Mammary epithelial cell (primary cell): ENCODE measurements at regions of chr7 and their contacts with region 1.

Region 1: DNA sequence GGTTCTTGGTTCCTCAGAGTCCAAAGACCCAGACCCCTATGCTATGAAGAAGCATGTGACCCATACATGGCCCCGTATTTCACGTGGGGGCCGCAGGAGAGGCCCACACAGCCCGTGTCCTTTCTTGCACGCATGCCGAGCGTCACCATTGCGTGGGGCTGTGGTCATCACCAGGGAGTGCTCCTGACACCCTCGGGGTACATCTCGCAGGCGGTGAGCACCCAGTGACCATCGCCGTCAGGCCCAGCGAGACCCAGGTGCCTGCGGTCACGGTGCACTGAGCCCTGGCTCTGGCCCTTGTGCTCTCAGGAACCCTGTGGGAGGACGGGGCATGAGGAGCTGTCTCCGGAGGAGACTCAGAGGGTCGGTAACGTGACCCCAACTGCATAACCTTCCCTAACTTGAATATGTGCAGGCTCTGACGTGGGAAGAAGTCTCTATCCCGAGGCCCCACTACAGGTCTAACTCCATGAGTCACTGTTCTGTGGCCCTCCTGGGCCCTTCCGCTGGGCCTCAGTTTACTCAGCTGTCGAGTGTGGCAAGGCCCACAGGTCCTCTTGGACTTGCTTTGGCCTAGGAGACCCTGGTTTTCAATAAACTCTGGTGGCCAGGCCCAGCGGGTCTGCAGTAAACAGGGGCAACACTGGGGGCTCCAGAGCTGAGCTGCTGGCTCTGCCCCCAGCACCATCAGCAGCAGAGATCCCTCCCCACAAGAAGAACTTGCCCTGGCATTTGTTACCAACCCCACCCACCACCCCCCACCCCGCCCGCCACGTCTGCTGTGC is 503.9 kb downstream of the PTPRN2 start:
- DNase-seq: no peak
- H3K4me3 ChIP-seq: no peak overlapping the region
- H3K27ac ChIP-seq: no peak overlapping the region
- H3K4me1 ChIP-seq: no peaks in the 10 kb centered on the region
- H3K27me3 ChIP-seq: no peaks in the 10 kb centered on the region
- CTCF ChIP-seq: no peak

Region 2: DNA sequence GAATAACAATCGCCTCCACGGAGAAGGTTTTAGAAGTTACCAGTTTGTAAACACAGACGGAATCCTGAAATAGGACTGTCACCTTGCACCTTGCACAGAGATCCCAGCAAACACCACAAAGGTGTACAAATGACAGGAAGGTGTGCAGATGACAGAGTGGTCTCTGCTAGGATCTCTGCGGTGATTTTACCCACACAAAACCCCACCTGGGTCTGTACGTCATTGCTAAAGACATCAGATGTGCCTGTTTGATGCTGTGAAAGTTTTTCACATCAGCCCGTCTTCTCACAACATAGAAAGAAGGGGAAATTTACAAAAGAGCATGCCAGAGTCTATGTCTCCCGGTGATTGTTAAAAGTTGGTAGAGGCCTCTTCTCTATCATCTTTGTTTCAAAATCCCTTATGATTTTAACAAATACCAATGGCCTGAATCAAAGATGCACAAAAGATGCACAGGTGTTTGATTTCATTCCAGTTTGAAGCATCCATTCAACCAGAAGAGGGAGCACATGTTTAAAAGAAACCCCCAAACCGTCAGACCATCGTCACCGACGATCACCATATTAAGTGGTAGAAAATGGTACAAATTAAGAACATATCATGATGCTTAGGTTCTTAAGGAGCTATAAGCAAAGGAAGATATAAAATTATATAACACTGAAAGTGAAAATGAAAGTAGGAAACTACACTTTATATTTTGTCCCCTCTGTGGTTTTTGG is 72.6 kb before region 1 on chr7:
- CTCF ChIA-PET with region 1: no interaction called
- dilution Hi-C with region 1: loop called (anchors 5 kb)
- in situ Hi-C with region 1: no loop called
- intact Hi-C with region 1: no loop called
- DNase-seq: no peak
- H3K4me3 ChIP-seq: no peak overlapping the region
- H3K27ac ChIP-seq: no peak overlapping the region
- H3K4me1 ChIP-seq: no peaks in the 10 kb centered on the region
- H3K27me3 ChIP-seq: no peaks in the 10 kb centered on the region
- CTCF ChIP-seq: no peak

Region 3: DNA sequence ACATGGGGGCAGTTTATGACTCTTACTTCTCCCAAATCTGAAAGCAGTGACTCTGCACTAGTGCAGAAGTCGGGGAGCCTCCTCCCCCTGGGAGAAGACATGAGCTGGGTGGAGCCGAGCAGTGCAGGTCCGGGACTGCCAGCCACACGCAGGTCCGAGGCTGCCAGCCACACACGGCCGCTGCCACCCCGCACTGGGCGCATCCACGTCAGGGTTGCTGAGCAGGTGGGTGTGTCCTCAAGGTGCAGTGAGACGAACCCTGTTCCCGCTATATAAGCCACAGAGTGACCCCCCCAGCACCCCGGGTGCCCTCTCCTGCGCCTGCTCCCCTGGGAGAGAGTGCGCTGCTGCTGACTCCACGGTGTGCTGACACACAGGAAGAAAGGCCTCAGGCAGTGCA is 73.7 kb after region 1 on chr7:
- CTCF ChIA-PET with region 1: no interaction called
- dilution Hi-C with region 1: loop called (anchors 5 kb)
- in situ Hi-C with region 1: no loop called
- intact Hi-C with region 1: no loop called
- DNase-seq: no peak
- H3K4me3 ChIP-seq: no peak overlapping the region
- H3K27ac ChIP-seq: no peak overlapping the region
- H3K4me1 ChIP-seq: no peaks in the 10 kb centered on the region
- H3K27me3 ChIP-seq: no peaks in the 10 kb centered on the region
- CTCF ChIP-seq: no peak